Panc1 (cell line): ENCODE measurements at regions of chr6 and their contacts with region 1.

Region 1: DNA sequence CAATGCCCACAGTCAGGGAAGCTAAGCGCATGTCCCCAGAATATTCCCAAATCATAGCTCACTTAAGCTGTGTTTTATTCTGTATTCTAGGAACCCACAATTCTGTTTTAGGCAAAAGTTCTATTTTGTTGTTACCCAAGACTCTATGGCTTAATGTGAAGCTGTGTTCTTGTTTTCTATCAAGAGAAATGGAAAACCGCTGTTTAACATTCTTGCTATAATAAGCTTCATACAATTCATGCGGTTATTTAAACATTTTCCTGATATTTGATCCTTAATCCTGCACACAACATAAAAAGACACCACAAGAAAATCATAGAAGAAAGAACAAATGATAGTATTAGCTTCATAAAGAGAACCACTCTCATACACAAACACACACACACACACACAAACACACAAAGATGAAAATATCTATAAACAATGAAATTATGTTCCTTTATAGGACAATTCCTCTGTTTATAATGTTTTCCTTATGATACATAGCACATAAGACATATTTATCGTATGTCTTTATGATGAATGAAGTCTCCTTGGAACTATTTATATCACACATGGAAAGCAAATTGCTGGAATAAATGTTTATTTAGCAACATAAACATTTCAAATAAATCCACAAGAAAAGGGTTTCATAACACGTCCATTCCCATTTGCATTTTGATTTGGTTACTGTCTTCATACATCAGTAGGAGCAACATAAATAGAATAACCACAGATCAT is 16.4 kb upstream of the COL21A1 start:
- DNase-seq: no peak
- ATAC-seq: no peak
- H3K4me3 ChIP-seq: no peak overlapping the region
- H3K27ac ChIP-seq: no peak overlapping the region
- H3K4me1 ChIP-seq: no peaks in the 10 kb centered on the region
- H3K27me3 ChIP-seq: no peaks in the 10 kb centered on the region; the same call in 1 of the 2 replicates
- CTCF ChIP-seq: no peak

Region 2: DNA sequence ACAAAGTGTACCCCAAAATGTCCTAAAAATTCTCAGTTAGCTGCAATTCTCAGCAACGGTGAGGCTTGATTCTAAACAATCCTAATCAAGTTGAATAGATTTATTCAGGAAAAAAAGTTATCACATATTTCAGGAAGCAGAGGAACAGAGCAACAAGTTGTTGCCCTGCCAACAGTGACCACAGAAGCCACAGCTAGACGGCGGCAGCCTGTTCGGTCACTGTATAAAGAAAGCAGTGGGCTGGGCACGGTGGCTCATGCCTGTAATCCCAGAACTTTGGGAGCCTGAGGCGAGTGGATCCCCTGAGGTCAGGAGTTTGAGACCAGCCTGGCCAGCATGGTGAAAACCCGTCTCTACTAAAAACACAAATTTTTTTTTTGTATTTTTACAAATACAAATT is 217.2 kb before region 1 on chr6:
- CTCF ChIA-PET with region 1: no interaction called
- POLR2A ChIA-PET with region 1: no interaction called
- in situ Hi-C with region 1: no loop called
- intact Hi-C with region 1: no loop called
- DNase-seq: no peak
- ATAC-seq: no peak
- H3K4me3 ChIP-seq: no peak overlapping the region
- H3K27ac ChIP-seq: no peak overlapping the region
- H3K4me1 ChIP-seq: no peaks in the 10 kb centered on the region
- H3K27me3 ChIP-seq: no peaks in the 10 kb centered on the region
- CTCF ChIP-seq: no peak

Region 3: DNA sequence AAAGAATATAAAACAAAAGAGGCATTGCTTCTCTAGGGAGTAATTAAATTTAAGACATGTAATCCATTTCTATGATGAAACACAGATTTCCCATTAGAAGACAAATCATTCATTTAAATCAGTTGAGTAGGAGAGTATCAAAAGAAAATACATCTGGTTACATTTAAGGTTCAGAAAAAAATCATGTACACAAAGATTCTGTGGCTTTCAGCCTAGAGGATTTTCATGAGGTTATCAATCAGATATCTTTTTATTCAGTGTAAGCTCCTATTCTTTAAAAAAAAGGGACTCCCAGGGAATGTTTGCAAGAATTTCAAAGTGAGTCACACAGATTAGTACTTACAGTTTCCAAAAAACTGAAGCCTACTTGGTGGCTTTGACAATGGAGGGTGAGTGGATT is 41.3 kb before region 1 on chr6:
- CTCF ChIA-PET with region 1: no interaction called
- POLR2A ChIA-PET with region 1: no interaction called
- in situ Hi-C with region 1: no loop called
- intact Hi-C with region 1: loop called (anchors 1 kb)
- DNase-seq: no peak
- ATAC-seq: no peak
- H3K4me3 ChIP-seq: no peak overlapping the region
- H3K27ac ChIP-seq: peak overlapping the region; percentile 52; the same call in 1 of the 2 replicates
- H3K4me1 ChIP-seq: peaks cover 9% of the 10 kb centered on the region; the same call in 1 of the 2 replicates
- H3K27me3 ChIP-seq: no peaks in the 10 kb centered on the region
- CTCF ChIP-seq: no peak

Region 4: DNA sequence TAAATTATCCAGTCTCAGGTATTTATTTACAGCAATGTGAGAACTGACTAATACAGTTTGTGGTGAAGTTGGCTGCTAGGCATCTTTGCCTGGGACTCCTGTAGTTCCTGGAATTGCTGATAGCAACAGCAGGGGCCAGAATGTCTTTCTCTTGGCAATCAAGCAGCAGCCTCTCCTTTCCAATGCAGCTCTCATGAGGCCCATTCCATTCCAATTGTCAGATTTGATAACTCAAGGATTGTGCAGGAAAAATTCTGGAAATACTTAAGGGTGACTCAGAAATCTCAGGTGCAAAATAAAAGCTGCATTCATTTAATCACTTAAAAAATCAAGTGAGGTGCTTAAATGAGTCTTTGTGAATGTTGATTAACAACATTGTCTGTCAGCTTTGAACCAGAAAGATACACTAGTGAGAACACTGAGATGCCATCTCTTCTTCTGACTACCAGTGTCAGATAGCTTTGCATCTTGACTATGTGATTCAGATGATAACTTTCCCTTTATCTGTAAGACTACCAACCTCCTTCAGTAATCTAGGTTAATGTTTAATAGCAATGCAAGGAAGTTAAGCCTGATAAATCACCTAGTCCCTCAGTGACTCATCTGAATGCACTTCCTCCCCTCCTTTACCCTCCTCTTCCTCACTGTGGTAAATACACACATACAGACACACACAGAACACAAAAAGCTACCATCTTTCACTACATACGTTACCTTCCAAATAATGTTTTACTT is 15.8 kb after region 1 on chr6:
- CTCF ChIA-PET with region 1: no interaction called
- POLR2A ChIA-PET with region 1: no interaction called
- in situ Hi-C with region 1: no loop called
- intact Hi-C with region 1: no loop called
- DNase-seq: no peak
- ATAC-seq: no peak
- H3K4me3 ChIP-seq: no peak overlapping the region
- H3K27ac ChIP-seq: no peak overlapping the region
- H3K4me1 ChIP-seq: no peaks in the 10 kb centered on the region
- H3K27me3 ChIP-seq: no peaks in the 10 kb centered on the region
- CTCF ChIP-seq: no peak

Region 5: GRCh38 chr6:56324396-56324795 is 60.6 kb after region 1 on chr6:
- CTCF ChIA-PET with region 1: no interaction called
- POLR2A ChIA-PET with region 1: no interaction called
- in situ Hi-C with region 1: no loop called
- intact Hi-C with region 1: no loop called
- DNase-seq: no peak
- ATAC-seq: no peak
- H3K4me3 ChIP-seq: no peak overlapping the region
- H3K27ac ChIP-seq: no peak overlapping the region
- H3K4me1 ChIP-seq: no peaks in the 10 kb centered on the region
- H3K27me3 ChIP-seq: peaks cover 2% of the 10 kb centered on the region; the same call in 1 of the 2 replicates
- CTCF ChIP-seq: no peak

Region 6: DNA sequence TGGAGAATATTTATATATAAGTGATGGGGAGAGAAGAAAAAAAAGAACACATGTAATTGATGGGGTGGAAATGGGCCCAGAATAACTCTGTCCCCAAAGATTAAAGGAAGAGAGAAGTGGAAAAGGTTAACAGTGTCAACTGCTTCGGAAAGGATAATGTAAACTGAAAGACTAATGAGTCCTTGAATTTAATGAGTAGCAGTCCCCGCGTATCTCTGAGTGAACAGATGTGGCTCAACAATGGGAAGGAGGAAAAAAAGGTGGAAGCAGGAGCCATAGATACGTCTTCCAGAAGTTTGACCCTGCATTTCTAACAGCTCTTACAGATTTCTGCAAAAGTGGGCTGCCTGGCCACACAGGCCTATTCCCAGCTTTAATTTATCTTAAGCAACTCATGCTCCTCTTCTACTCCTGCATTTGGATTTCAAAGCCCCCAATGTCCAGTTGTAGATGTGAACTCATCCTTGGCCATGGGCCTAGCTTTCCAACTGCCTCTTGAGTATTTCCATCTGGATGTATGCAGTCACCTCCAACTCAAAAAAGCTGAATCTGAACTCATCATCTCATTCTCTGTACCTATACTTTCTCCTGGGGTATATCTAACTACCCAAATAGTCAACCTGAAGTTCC is 317.7 kb after region 1 on chr6:
- CTCF ChIA-PET with region 1: no interaction called
- POLR2A ChIA-PET with region 1: no interaction called
- in situ Hi-C with region 1: no loop called
- intact Hi-C with region 1: no loop called
- DNase-seq: no peak
- ATAC-seq: no peak
- H3K4me3 ChIP-seq: no peak overlapping the region
- H3K27ac ChIP-seq: no peak overlapping the region
- H3K4me1 ChIP-seq: no peaks in the 10 kb centered on the region
- H3K27me3 ChIP-seq: no peaks in the 10 kb centered on the region
- CTCF ChIP-seq: no peak